Activated naive CD8-positive, alpha-beta T cell treated with anti-CD3 and anti-CD28 coated beads, Interleukin-2, amount 10 ng/mL, durations not matched to agents 7 days and 5 days (primary cell): ENCODE measurements at regions of chr12 and their contacts with region 1.

Region 1: GRCh38 chr12:39619660-39620433 is at the start of gene ABCD2:
- DNase-seq: peak; percentile 72
- ATAC-seq: peak; percentile 73
- H3K4me3 Mint-ChIP-seq: no peak within 1 kb of the TSS
- H3K27ac Mint-ChIP-seq: no peak within 1 kb of the TSS
- H3K4me1 Mint-ChIP-seq: peaks cover 31% of the 10 kb centered on the region
- H3K27me3 Mint-ChIP-seq: no peaks in the 10 kb centered on the region
- total RNA-seq, gene ABCD2: 30.8 TPM

Region 2: DNA sequence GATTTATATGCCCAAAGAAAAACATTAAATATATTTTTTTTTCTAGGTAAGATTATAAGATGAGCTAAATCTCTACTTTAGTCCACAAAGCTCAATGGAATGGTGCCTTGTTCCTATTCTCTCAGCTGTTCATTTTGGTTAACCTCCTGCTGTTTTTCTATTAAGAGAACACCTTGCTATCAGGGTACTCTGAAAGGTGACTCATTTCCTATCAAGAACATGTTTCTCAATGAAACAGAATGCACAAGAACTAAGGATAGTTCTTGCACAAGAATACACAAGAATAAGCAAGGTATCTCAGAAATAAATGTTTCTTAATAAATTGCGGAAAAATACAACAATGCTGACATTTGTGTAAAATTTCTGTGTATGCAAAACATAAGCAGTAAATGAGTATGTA is 14.3 kb before region 1 on chr12:
- POLR2A ChIA-PET with region 1: interaction called, 10 read pairs
- DNase-seq: no peak
- ATAC-seq: no peak
- H3K4me3 Mint-ChIP-seq: no peak overlapping the region
- H3K27ac Mint-ChIP-seq: no peak overlapping the region
- H3K4me1 Mint-ChIP-seq: peaks cover 24% of the 10 kb centered on the region
- H3K27me3 Mint-ChIP-seq: no peaks in the 10 kb centered on the region

Region 3: DNA sequence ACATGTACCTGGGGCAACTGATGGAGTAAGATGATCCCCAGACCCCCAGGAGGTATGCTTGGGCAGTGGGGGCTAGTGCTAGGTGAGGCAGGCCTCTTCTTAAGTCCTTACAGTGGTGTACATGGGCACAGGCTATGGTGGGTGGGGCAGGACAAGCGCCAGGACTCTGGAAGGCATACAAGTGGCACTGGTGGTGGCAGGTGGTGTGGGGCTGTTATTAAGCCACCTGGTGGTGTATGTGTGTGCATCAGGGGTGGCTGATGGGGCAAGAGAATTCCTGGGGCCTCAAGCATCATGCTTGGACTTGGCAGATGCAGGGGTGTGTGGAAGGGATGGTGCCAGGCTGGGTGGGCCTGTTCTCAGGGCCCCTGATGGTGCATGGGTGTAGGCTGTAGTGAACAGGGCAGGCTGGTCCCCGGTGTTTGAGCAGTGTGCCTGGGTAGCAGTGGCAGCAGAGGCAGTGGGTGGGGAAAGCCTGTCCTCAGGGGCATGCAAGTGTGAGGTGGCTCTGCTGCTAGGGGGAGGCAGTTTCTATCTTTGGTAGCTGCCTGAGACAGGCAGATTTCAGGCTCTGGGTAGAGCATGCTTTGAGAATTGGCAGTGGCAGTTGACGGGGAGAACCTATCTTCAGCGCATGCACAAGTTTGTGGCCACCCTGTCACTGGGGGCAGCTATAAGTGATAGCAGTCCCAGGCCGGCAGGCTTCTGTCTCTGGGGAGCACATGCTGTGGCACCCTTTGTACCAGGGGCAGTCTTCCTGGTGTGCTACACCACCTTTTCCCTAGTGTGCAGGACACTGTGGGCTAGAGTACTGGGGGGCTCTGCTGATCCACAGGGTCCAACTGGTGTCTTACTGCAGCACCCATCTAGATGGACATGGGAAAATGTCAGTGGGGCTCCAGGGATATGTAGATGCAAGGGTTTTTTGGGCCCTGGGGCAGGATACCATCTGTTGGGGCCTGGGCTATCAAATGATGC is 52.3 kb after region 1 on chr12:
- POLR2A ChIA-PET with region 1: interaction called, 27 read pairs
- DNase-seq: no peak
- ATAC-seq: no peak
- H3K4me3 Mint-ChIP-seq: no peak overlapping the region
- H3K27ac Mint-ChIP-seq: no peak overlapping the region
- H3K4me1 Mint-ChIP-seq: peaks cover 28% of the 10 kb centered on the region
- H3K27me3 Mint-ChIP-seq: no peaks in the 10 kb centered on the region

Region 4: GRCh38 chr12:39682689-39683477 is 63.0 kb after region 1 on chr12:
- POLR2A ChIA-PET with region 1: interaction called, 71 read pairs
- DNase-seq: no peak
- ATAC-seq: peak; percentile 24
- H3K4me3 Mint-ChIP-seq: peak overlapping the region; percentile 81
- H3K27ac Mint-ChIP-seq: peak overlapping the region; percentile 88
- H3K4me1 Mint-ChIP-seq: peaks cover 36% of the 10 kb centered on the region
- H3K27me3 Mint-ChIP-seq: no peaks in the 10 kb centered on the region